Astrocyte of the cerebellum (primary cell): ENCODE measurements at regions of chr11 and their contacts with region 1.

Region 1: DNA sequence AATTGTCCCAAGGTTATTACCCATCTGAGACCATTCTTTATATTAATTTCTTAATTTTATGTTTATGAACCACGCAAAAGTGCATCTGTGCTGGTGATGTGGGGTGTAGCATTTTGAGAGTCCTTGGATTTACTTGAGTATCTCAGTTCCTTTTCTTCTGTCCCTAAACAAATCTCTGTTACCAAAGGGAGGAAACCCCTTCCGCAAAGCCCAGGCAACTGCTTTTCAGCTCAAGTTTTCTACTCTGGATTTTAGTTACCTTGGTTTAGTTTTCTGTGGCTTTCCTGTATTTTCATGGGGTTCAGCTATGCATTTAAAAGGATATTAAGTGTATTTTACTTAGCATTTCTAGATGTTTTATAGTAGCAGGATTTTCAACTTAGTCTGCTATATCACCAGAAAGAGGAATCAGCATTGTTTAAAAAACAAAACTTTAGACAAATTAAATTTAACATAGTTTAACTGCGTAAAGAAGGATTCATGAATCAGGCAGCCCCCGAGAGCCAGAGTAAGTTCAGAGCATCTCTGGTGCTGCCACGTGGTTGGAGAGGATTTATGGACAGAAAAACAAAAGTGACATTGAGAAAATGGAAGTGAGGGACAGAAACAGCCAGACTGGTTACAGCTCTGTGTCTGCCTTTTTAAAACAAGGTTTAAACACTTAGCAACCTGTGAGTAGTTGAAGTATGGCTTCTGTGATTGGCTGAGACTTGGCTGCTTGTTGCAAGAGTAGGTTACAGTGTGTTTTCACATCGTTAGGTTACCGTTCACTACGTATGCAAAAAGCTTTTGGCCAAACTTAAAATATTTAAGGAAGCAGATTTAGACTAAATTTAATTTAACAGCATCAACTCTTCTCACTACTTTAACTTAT is 9.6 kb downstream of the ADM start:
- DNase-seq: no peak
- H3K4me3 ChIP-seq: no peak overlapping the region
- CTCF ChIP-seq: no peak

Region 2: GRCh38 chr11:10394229-10395101 is 80.0 kb after region 1 on chr11:
- in situ Hi-C with region 1: loop called (anchors 5 kb)
- DNase-seq: no peak
- H3K4me3 ChIP-seq: no peak overlapping the region
- CTCF ChIP-seq: no peak